ENCODE measurements at regions of chr12 and their contacts with region 1.

Region 1: DNA sequence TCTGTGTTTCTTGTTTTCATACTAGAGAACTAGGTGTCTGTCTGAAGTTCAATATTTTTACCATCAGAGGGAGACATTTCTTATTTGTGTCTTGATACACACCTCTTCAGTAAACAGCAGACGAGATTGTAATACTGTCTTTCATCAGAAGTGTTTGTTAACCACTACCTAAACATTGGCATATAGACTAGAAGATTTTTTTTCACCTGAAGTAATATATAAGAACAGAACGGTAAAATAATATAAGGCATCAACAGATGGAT is 190.7 kb downstream of the ACSS3 start:
- DNase-seq: no peak
- H3K4me3 ChIP-seq: no peak overlapping the region
- H3K27ac ChIP-seq: no peak overlapping the region
- H3K4me1 ChIP-seq: peaks cover 0 to 10% (median 0%) of the 10 kb centered on the region in 4 donors
- H3K27me3 ChIP-seq: no peaks in the 10 kb centered on the region
- CTCF ChIP-seq: no peak
- EP300 ChIP-seq: no peak
- POLR2A ChIP-seq: no peak

Region 2: DNA sequence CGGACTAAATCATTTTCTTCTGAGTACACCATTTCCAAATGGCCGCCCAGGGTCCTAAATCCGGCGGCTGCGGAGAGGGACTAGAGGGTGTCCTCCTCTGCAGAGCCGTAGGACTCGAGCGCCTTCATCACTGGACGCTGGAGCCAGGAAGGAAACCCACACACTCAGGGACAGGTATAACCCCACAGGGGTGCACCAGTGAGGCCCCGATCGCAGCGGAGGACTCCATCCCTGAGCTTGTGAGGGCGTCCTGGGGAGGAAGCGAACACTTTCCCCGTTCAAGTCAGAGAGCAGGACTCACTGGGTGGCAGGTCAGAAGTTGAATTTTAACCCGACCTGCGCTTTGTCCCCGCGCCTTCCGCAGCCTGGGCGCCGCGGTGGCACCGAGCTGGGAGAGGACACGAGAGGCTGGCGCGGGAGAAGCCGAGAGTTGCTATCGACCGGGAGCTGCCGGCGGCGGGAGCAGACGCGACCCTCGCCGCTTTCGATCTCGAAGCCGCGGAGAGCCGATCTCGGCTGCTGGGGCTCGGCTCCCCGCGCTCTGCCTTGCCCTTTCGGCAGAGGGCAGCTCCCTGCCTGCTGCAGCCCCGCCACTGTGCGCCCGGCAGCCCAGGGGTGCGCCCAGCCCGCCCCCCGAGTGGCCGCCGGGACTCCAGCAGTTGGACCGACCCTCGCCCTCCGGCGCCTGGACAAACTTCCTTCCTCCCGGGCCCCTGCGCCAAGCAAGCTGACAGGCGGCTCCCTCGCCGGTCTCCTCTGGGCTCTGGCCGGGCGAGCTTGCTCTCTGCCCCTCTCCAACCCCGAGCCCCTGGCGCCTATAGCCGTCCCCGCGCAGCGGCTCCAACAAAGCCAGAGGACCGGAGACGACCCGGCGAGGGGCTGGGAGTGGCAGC is 331.9 kb before region 1 on chr12:
- intact Hi-C with region 1: loop called (anchors 10 kb)
- DNase-seq: peak; percentile 69
- H3K4me3 ChIP-seq: peak overlapping the region; percentile 51 to 81 (median 69)
- H3K27ac ChIP-seq: peak overlapping the region; percentile 42 to 73 (median 72)
- H3K4me1 ChIP-seq: peaks cover 0 to 14% (median 3%) of the 10 kb centered on the region in 4 donors
- H3K27me3 ChIP-seq: peaks cover 0 to 13% (median 6%) of the 10 kb centered on the region in 3 donors
- CTCF ChIP-seq: no peak
- EP300 ChIP-seq: no peak
- POLR2A ChIP-seq: no peak

Region 3: GRCh38 chr12:81208151-81208946 is 60.2 kb before region 1 on chr12:
- intact Hi-C with region 1: no loop called
- DNase-seq: no peak
- H3K4me3 ChIP-seq: no peak overlapping the region
- H3K27ac ChIP-seq: peak overlapping the region in 1 of 4 donors; percentile 57
- H3K4me1 ChIP-seq: peaks cover 0 to 21% (median 11%) of the 10 kb centered on the region in 4 donors
- H3K27me3 ChIP-seq: no peaks in the 10 kb centered on the region
- CTCF ChIP-seq: no peak
- EP300 ChIP-seq: no peak
- POLR2A ChIP-seq: no peak

Region 4: GRCh38 chr12:81403348-81403747 is 134.8 kb after region 1 on chr12:
- intact Hi-C with region 1: no loop called
- DNase-seq: no peak
- H3K4me3 ChIP-seq: no peak overlapping the region
- H3K27ac ChIP-seq: no peak overlapping the region
- H3K4me1 ChIP-seq: peaks cover 0 to 7% (median 1%) of the 10 kb centered on the region in 4 donors
- H3K27me3 ChIP-seq: no peaks in the 10 kb centered on the region
- CTCF ChIP-seq: no peak
- EP300 ChIP-seq: no peak
- POLR2A ChIP-seq: no peak